Left ventricle myocardium superior (tissue), 1 donor: ENCODE measurements at regions of chr10 and their contacts with region 1.

Region 1: GRCh38 chr10:95363303-95363912 is 72.6 kb upstream of the PDLIM1 start:
- DNase-seq: no peak
- ATAC-seq: peak; percentile 34

Region 2: DNA sequence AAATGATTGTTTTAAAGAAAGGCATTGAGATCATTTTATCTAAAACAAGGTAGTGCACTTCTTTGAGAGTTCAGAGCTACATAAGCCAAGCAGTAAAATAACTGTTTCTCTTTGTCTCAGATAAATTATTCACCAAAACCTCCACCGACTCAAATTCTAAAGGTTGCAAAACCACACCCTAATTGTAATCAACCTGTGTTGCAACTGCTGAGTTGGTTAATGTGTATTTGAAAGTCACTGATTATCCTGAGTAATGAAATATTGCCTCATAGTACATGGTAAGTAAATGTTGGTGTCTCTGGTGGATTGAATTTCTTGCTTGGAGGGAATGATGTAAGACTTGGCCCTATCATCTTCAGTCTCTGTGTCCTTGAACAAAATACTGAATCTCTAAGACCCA is 460.8 kb before region 1 on chr10:
- intact Hi-C with region 1: no loop called
- DNase-seq: no peak
- ATAC-seq: peak; percentile 29

Region 3: DNA sequence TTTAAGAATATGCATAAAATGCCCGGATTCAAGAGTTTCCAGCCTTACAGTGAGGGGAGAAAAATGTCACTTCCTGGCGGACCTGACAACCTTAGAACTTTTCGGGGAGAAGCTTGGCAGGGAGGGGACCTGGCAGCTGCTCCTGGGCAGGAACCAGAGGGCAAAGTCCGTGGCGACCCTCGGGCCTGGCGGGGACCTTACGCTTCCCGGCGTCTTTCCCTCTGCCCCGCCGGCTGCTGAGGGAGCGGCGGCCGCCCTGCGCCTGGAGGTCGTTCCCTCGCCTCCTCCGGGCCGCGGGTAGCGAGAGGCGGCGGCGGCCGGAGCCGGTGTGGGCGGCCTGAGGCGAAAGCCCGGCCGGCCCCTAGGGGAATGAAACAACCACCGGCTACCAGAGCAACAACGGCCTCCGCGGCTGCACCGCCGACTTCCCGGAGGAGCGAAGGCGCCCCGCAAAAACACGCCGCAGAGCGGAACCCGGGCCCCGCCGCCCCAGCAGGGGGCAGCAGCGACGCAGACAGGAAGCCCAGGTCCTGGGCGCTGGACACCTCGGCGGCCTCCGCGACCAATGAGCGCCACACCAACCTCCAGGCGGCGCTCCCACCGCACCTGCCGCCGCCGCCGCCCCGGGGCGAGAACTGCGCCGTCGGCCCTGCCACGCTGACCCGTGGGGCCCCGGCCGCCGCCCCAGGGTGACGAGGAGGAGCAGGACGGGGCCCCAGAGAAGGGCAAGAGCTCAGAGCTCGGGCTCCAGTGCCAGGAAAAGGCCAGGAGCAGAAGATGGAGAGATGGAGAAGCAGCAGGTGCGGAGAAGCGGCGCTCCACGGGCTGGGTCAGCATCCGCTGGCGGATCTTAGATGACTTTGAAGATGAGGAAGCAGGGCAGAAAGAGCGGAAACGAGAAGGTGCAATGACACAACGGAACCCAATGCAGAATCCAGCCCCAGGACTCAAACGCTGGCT is 179.9 kb before region 1 on chr10:
- intact Hi-C with region 1: loop called (anchors 10 kb)
- DNase-seq: peak; percentile 94
- ATAC-seq: peak; percentile 99

Region 4: GRCh38 chr10:95246579-95247051 is 116.8 kb before region 1 on chr10:
- intact Hi-C with region 1: loop called (anchors 5 kb)
- DNase-seq: peak; percentile 77
- ATAC-seq: peak; percentile 53